Prostate gland (tissue), 2 donors: ENCODE measurements at regions of chr1 and their contacts with region 1.

Region 1: GRCh38 chr1:15128520-15129313 is 24.8 kb upstream of the TMEM51 start:
- DNase-seq: peak; percentile 64
- H3K4me3 ChIP-seq: no peak overlapping the region
- H3K27ac ChIP-seq: no peak overlapping the region
- H3K4me1 ChIP-seq: no peaks in the 10 kb centered on the region
- H3K27me3 ChIP-seq: no peaks in the 10 kb centered on the region
- CTCF ChIP-seq: peak; percentile 89 to 94 (median 90)
- POLR2A ChIP-seq: no peak

Region 2: GRCh38 chr1:15272009-15272788 is 143.5 kb after region 1 on chr1:
- intact Hi-C with region 1: loop called (anchors 2 kb)
- DNase-seq: peak; percentile 59
- H3K4me3 ChIP-seq: no peak overlapping the region
- H3K27ac ChIP-seq: no peak overlapping the region
- H3K4me1 ChIP-seq: no peaks in the 10 kb centered on the region
- H3K27me3 ChIP-seq: no peaks in the 10 kb centered on the region
- CTCF ChIP-seq: peak in 3 of 4 experiments; percentile 70 to 86 (median 82)
- POLR2A ChIP-seq: no peak

Region 3: DNA sequence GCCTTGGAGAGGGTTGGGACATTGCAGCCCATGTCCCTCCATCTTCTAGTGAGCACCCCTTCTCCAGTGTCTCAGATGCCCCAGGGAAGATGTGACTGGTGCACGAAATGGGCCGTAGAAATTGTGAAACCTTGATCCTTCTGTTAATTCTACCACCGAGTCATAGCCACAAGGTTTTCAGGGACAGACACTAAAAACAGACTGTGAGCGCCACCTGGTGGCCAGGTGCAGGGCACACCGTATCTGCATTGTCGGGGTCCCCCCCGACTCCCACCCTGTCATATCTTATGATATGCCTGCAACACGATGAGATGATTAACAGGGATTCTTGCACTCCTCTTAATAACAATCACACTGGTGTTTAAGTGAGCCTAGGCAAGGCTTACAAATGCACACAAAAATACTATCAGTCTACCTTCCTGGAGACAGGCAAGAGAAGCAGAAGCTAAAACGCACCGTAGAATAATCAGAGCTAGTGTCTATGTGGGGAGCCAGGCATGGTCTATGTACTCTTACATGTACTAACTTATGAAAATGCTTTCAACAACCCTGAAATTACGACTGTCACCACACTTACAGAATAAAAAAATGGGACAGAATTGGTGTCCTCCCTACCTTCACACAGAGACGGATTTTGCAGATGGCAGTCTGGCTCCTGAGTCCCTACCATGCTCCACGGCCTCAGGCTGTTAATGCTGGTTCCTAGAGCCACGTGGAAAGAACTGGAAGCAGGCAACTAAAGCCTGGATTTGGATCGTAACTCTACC is 176.2 kb after region 1 on chr1:
- intact Hi-C with region 1: loop called (anchors 2 kb)
- DNase-seq: peak; percentile 66
- H3K4me3 ChIP-seq: no peak overlapping the region
- H3K27ac ChIP-seq: no peak overlapping the region
- H3K4me1 ChIP-seq: no peaks in the 10 kb centered on the region
- H3K27me3 ChIP-seq: no peaks in the 10 kb centered on the region
- CTCF ChIP-seq: peak; percentile 83 to 99 (median 90)
- POLR2A ChIP-seq: no peak

Region 4: DNA sequence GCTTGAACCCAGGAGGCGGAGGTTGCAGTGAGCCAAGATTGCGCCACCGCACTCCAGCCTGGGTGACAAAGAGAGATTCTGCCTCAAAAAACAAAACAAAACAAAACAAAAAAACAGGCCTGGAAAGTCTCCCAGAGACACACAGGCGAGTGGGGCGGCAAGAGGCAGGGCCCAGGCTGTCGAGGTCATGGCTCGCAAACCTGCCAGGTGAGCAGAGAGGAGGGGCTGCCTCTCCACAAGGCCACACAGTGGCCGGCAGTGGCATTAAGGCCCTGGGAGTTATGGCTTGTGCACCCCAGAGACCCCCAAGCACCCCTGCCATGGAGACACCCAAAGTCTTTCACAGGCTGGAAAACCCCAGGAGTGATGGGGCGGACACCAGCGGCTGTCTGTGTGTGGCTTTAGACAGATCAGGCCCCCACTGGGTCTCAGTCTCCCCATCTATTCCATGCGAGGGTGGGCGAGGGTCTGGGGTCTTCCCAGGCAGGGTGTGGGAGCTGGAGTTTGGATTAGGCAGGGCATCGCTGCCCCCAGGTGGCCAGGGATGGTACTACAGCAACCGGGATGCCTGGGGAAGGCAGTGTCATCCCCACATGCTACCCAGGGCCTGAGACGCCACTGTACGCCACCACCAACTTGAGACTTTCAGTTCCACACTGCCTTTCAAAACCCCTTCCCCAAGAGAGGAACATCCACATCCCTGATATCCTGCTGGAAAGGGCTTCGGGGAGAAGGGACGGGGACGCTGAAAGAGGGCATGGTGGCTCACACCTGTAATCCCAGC is 302.3 kb after region 1 on chr1:
- intact Hi-C with region 1: loop called (anchors 10 kb)
- DNase-seq: peak; percentile 57
- H3K4me3 ChIP-seq: no peak overlapping the region
- H3K27ac ChIP-seq: no peak overlapping the region
- H3K4me1 ChIP-seq: no peaks in the 10 kb centered on the region
- H3K27me3 ChIP-seq: no peaks in the 10 kb centered on the region
- CTCF ChIP-seq: peak; percentile 86 to 97 (median 93)
- POLR2A ChIP-seq: no peak

Region 5: DNA sequence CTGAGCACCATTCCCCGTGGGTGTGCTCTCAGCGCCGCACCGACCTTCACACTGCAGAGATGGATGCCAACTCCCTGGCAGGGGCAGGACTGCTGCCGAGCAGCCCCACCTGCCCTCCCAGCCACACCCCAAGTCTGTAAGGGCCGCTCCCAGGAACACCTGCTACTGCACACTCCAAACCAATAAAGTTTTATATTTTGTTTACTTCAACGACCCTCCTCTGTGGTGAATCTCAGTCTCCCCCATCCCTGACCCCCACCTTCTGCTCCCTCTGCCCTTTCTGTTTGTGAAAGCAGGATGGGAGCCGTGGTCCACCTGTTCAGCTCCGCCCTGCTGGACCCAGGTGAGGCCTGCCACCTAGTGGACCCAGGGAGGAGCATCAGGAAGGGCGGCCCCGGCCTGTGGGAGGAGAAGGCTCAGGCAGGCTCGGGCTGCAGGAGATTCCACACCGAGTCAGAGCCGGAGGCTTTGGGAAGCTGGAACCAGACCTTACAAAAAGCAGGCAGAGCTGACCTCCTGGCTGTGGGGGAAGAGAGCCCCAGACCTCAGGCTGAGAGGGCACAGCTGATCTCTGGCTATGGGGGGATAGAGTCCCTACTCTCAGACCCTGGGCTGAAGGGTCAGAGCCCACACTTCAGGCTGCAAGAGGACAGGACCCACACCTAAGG is 612.6 kb after region 1 on chr1:
- intact Hi-C with region 1: no loop called
- DNase-seq: peak; percentile 80
- H3K4me3 ChIP-seq: no peak overlapping the region
- H3K27ac ChIP-seq: no peak overlapping the region
- H3K4me1 ChIP-seq: no peaks in the 10 kb centered on the region
- H3K27me3 ChIP-seq: no peaks in the 10 kb centered on the region
- CTCF ChIP-seq: peak; percentile 37 to 95 (median 83)
- POLR2A ChIP-seq: no peak